ENCODE measurements at regions of chr4 and their contacts with region 1.

Region 1: DNA sequence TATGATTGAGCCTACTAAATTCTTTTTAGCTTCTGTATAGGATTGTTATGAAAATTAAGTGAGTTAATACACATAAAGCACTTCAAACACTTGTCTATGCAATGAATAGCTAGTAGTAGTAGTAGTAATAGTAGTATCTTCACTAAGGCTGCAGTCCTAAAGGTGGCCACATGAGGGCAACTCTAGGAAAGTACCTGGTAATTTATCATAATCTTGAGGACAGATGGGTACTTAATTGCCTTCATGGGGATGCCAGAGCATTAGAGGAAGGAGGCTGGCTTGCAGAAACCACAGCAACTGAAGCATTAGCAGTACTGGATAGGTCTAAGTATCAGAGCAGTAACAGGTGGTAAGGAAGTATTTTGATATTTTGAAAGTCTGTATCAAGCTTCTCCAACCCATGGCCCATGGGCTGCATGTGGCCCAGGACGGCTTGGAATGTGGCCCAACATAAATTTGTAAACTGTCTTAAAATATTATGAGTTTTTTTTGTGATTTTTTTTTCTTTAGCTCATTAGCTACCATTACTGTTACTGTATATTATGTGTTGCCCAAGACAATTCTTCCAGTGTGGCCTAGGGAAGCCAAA is 17.3 kb downstream of the NIPAL1 start:
- DNase-seq: peak; percentile 54
- H3K4me3 Mint-ChIP-seq: no peak overlapping the region
- H3K27ac Mint-ChIP-seq: no peak overlapping the region
- H3K4me1 Mint-ChIP-seq: peaks cover 2% of the 10 kb centered on the region
- H3K27me3 Mint-ChIP-seq: peaks cover 6% of the 10 kb centered on the region

Region 2: GRCh38 chr4:48018091-48018490 is 15.8 kb before region 1 on chr4:
- CTCF ChIA-PET with region 1: interaction called, 12 read pairs
- POLR2A ChIA-PET with region 1: no interaction called
- DNase-seq: no peak
- H3K4me3 Mint-ChIP-seq: no peak overlapping the region
- H3K27ac Mint-ChIP-seq: no peak overlapping the region
- H3K4me1 Mint-ChIP-seq: peaks cover 4% of the 10 kb centered on the region
- H3K27me3 Mint-ChIP-seq: peaks cover 58% of the 10 kb centered on the region

Region 3: GRCh38 chr4:48047421-48047844 is 13.5 kb after region 1 on chr4:
- CTCF ChIA-PET with region 1: interaction called, 14 read pairs
- POLR2A ChIA-PET with region 1: interaction called, 3 read pairs
- DNase-seq: peak; percentile 82
- H3K4me3 Mint-ChIP-seq: no peak overlapping the region
- H3K27ac Mint-ChIP-seq: no peak overlapping the region
- H3K4me1 Mint-ChIP-seq: peaks cover 21% of the 10 kb centered on the region
- H3K27me3 Mint-ChIP-seq: peaks cover 81% of the 10 kb centered on the region

Region 4: GRCh38 chr4:48085821-48086607 is 52.1 kb after region 1 on chr4:
- CTCF ChIA-PET with region 1: interaction called, 12 read pairs
- POLR2A ChIA-PET with region 1: no interaction called
- DNase-seq: no peak
- H3K4me3 Mint-ChIP-seq: no peak overlapping the region
- H3K27ac Mint-ChIP-seq: peak overlapping the region; percentile 40
- H3K4me1 Mint-ChIP-seq: no peaks in the 10 kb centered on the region
- H3K27me3 Mint-ChIP-seq: no peaks in the 10 kb centered on the region

Region 5: DNA sequence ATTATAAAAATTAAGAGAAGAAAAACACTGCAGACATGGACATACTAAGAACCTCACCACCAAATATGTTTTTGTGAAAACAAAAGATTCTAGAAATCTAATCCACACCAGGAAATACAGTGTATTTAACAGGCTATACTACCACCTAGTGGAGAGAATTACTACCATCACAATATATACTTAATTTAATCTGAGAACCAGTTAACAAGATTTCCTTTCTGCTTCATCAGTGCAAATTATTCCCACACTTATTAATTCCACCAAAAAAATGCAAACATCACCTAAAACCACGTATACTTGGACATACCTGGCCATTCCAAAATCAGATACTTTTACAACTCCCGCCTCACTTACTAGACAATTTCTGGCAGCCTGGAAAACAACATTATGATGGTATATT is 107.1 kb after region 1 on chr4:
- CTCF ChIA-PET with region 1: interaction called, 24 read pairs
- POLR2A ChIA-PET with region 1: no interaction called
- DNase-seq: no peak
- H3K4me3 Mint-ChIP-seq: no peak overlapping the region
- H3K27ac Mint-ChIP-seq: no peak overlapping the region
- H3K4me1 Mint-ChIP-seq: peaks cover 47% of the 10 kb centered on the region
- H3K27me3 Mint-ChIP-seq: no peaks in the 10 kb centered on the region